Activated T-helper 1 cell treated with anti-CD3 and anti-CD28 coated beads, Interleukin-12 subunit alpha, Interleukin-12 subunit beta, Interleukin-2, Interleukin-4 antibody, amounts not matched to agents 30 ng/mL and 10 ng/mL and 1 ng/mL, durations not matched to agents 14 hours and 24 hours and 36 hours (primary cell): ENCODE measurements at regions of chr9 and their contacts with region 1.

Region 1: GRCh38 chr9:14322211-14323082 is 8.5 kb upstream of the NFIB start:
- DNase-seq: peak; percentile 82
- H3K4me3 Mint-ChIP-seq: peak overlapping the region; percentile 82
- H3K27ac Mint-ChIP-seq: peak overlapping the region; percentile 72
- H3K4me1 Mint-ChIP-seq: peaks cover 19% of the 10 kb centered on the region
- H3K27me3 Mint-ChIP-seq: peaks cover 54% of the 10 kb centered on the region

Region 2: GRCh38 chr9:14347406-14348122 is 25.1 kb after region 1 on chr9:
- intact Hi-C with region 1: loop called (anchors 2 kb)
- DNase-seq: no peak
- H3K4me3 Mint-ChIP-seq: no peak overlapping the region
- H3K27ac Mint-ChIP-seq: no peak overlapping the region
- H3K4me1 Mint-ChIP-seq: no peaks in the 10 kb centered on the region
- H3K27me3 Mint-ChIP-seq: peaks cover 49% of the 10 kb centered on the region

Region 3: DNA sequence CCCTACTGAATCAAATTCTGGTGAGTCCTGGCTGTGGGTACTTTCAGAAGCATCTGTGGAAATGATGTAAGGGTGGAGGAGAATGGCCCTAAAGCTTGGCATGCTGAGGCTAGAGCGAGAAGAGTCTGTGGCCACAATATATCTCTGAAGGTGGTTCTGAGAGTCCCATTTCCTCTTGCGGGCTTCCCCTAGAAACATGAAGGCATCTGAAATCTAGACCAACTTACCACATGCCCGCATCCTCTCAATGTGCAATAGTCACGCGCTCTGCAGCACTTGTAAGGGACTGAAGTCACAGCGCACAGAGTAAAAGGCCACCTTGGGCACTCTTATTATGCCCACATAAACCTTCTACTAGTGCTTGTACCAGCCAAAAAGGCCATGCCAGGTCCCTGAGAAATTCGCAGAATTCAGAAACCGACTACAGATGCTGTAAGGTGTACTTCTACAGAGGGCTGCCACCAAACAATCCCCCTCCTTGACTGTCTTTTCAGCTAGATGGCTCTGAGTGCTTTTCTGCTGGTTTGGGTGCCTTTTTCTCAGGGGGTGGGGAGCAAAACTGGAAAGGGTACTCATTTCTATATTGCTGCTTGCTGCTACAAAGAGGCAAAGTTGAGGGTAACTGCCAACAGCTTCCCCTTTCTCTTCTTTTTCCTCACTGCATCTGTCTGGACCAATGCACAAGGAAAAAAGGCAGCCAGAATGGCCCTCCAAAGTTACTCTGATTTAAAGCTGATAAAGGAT is 263.5 kb after region 1 on chr9:
- intact Hi-C with region 1: loop called (anchors 5 kb)
- DNase-seq: peak; percentile 40
- H3K4me3 Mint-ChIP-seq: no peak overlapping the region
- H3K27ac Mint-ChIP-seq: no peak overlapping the region
- H3K4me1 Mint-ChIP-seq: peaks cover 13% of the 10 kb centered on the region
- H3K27me3 Mint-ChIP-seq: peaks cover under 1% of the 10 kb centered on the region

Region 4: DNA sequence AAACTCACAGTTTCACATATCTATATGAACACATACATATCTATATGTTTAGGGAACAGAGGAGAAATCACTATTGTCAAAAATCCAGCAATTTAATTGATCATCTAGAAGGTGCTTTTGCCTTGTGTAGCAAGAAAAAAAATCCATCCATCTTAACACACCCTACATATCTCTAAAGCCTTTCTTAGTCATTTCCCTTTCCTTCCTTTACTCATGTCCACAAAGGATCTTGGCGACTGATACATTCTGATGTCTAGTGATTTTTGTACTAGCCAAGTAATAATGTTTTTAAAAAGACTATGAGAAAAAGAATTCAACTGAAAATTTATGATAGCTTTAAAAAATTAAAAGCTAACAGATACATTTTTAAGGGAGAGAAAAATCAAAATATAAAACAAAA is 348.3 kb after region 1 on chr9:
- intact Hi-C with region 1: loop called (anchors 10 kb)
- DNase-seq: no peak
- H3K4me3 Mint-ChIP-seq: no peak overlapping the region
- H3K27ac Mint-ChIP-seq: peak overlapping the region; percentile 27
- H3K4me1 Mint-ChIP-seq: peaks cover 11% of the 10 kb centered on the region
- H3K27me3 Mint-ChIP-seq: no peaks in the 10 kb centered on the region

Region 5: DNA sequence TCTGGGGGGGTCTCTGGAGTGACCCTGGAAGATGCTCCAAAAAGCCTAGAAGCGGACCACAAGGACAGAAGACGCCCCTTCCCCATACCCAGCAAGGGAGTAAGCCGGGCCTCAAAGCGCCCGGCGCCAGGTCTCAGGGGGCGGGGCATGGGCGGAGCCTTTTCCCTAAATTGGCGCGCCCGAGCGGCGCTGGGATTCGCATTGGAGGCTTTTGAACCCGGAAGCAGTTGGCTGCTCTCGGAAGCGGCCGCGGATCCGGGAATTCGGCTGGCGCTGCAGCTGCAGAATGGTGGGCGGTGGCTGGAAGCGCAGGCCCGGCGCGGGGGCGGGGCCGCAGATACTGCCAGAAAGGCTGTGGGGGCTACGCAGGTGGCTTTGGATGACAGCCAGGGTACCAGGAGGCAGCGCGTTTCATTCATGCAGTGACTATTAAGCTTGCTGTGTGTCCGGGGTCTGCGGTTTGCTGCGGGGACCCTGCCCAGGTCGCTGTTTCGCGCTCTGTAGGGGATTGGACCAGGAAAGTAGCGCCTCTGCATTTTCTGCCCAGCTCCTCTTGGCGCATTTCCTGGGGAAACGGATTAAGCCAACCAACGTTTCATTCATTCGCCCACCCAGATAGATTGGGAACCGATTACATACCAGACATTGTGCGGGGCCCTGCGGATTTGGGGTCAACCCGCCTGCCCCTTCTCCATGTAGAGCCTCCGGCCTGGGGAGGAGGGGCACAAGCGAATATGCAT is 670.8 kb after region 1 on chr9:
- intact Hi-C with region 1: loop called (anchors 10 kb)
- DNase-seq: peak; percentile 32
- H3K4me3 Mint-ChIP-seq: peak overlapping the region; percentile 73
- H3K27ac Mint-ChIP-seq: peak overlapping the region; percentile 41
- H3K4me1 Mint-ChIP-seq: peaks cover 39% of the 10 kb centered on the region
- H3K27me3 Mint-ChIP-seq: peaks cover 2% of the 10 kb centered on the region

Region 6: GRCh38 chr9:15552636-15553527 is 1230.4 kb after region 1 on chr9 and contains the start of gene CCDC171:
- intact Hi-C with region 1: loop called (anchors 2 kb)
- DNase-seq: peak; percentile 84
- H3K4me3 Mint-ChIP-seq: peak within 1 kb of the TSS; percentile 87
- H3K27ac Mint-ChIP-seq: peak within 1 kb of the TSS; percentile 75
- H3K4me1 Mint-ChIP-seq: peaks cover 20% of the 10 kb centered on the region
- H3K27me3 Mint-ChIP-seq: peaks cover 25% of the 10 kb centered on the region
- total RNA-seq, gene CCDC171: 1.4 and 2.0 TPM in 2 replicates